ENCODE measurements at regions of chr13 and their contacts with region 1.

Region 1: GRCh38 chr13:25375727-25376358 is 4.1 kb downstream of the ATP8A2 start:
- DNase-seq: peak; percentile 31
- ATAC-seq: peak; percentile 84
- H3K4me3 ChIP-seq: no peak overlapping the region
- H3K27ac ChIP-seq: no peak overlapping the region
- H3K4me1 ChIP-seq: no peaks in the 10 kb centered on the region
- H3K27me3 ChIP-seq: no peaks in the 10 kb centered on the region
- CTCF ChIP-seq: peak; percentile 44 to 66 (median 63); a peak in 5 of 6 replicates
- POLR2A ChIP-seq: no peak
- RAD21 ChIP-seq: peak; percentile 53

Region 2: GRCh38 chr13:25085125-25085742 is 290.6 kb before region 1 on chr13:
- CTCF ChIA-PET with region 1: interaction called, 3 read pairs
- POLR2A ChIA-PET with region 1: no interaction called
- RAD21 ChIA-PET with region 1: no interaction called
- intact Hi-C with region 1: loop called (anchors 2 kb)
- DNase-seq: peak; percentile 36
- ATAC-seq: peak; percentile 91
- H3K4me3 ChIP-seq: no peak overlapping the region
- H3K27ac ChIP-seq: no peak overlapping the region
- H3K4me1 ChIP-seq: no peaks in the 10 kb centered on the region
- H3K27me3 ChIP-seq: no peaks in the 10 kb centered on the region
- CTCF ChIP-seq: peak; percentile 31 to 78 (median 73); a peak in 5 of 6 replicates
- POLR2A ChIP-seq: no peak
- RAD21 ChIP-seq: peak; percentile 57

Region 3: GRCh38 chr13:25232937-25233515 is 142.8 kb before region 1 on chr13:
- CTCF ChIA-PET with region 1: interaction called, 6 read pairs
- POLR2A ChIA-PET with region 1: no interaction called
- RAD21 ChIA-PET with region 1: no interaction called
- intact Hi-C with region 1: loop called (anchors 2 kb)
- DNase-seq: peak; percentile 19
- ATAC-seq: peak; percentile 86
- H3K4me3 ChIP-seq: no peak overlapping the region
- H3K27ac ChIP-seq: no peak overlapping the region
- H3K4me1 ChIP-seq: no peaks in the 10 kb centered on the region
- H3K27me3 ChIP-seq: peaks cover 5% of the 10 kb centered on the region; the same call in 1 of the 2 replicates
- CTCF ChIP-seq: peak; percentile 32 to 64 (median 54); a peak in 5 of 6 replicates
- POLR2A ChIP-seq: no peak
- RAD21 ChIP-seq: peak; percentile 32; the same call in 1 of the 2 replicates